Activated B cell treated with CpG ODN at 0.5 μM for 24 hours (primary cell): ENCODE measurements at regions of chr10 and their contacts with region 1.

Region 1: GRCh38 chr10:72248468-72249151 is 25.1 kb upstream of the DDIT4 start:
- DNase-seq: peak; percentile 54
- ATAC-seq: peak; percentile 78
- H3K4me3 Mint-ChIP-seq: peak overlapping the region; percentile 74
- H3K27ac Mint-ChIP-seq: peak overlapping the region; percentile 97
- H3K4me1 Mint-ChIP-seq: peaks cover 85% of the 10 kb centered on the region
- H3K27me3 Mint-ChIP-seq: no peaks in the 10 kb centered on the region
- CTCF ChIP-seq: no peak

Region 2: DNA sequence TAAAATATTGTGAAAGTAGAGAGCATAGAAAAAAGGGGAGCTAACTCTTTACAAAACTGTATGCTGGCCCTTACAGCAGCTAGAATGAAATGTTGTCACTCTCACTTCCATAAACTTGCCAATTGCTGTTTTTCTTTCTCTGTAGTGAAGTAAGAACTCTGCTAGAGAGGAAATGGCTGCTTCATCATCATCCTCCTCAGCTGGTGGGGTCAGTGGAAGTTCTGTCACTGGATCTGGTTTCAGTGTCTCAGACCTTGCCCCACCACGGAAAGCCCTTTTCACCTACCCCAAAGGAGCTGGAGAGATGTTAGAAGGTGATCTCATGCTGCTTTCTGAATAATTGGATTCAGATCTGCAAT is 24.9 kb before region 1 on chr10:
- CTCF ChIA-PET with region 1: interaction called, 5 read pairs
- POLR2A ChIA-PET with region 1: interaction called, 70 read pairs
- intact Hi-C with region 1: loop called (anchors 1 kb)
- DNase-seq: no peak
- ATAC-seq: peak; percentile 47
- H3K4me3 Mint-ChIP-seq: peak overlapping the region; percentile 59
- H3K27ac Mint-ChIP-seq: peak overlapping the region; percentile 84
- H3K4me1 Mint-ChIP-seq: peaks cover 67% of the 10 kb centered on the region
- H3K27me3 Mint-ChIP-seq: no peaks in the 10 kb centered on the region
- CTCF ChIP-seq: no peak

Region 3: GRCh38 chr10:72229261-72230251 is 19.1 kb before region 1 on chr10:
- CTCF ChIA-PET with region 1: interaction called, 5 read pairs
- POLR2A ChIA-PET with region 1: interaction called, 20 read pairs
- intact Hi-C with region 1: no loop called
- DNase-seq: no peak
- ATAC-seq: no peak
- H3K4me3 Mint-ChIP-seq: no peak overlapping the region
- H3K27ac Mint-ChIP-seq: no peak overlapping the region
- H3K4me1 Mint-ChIP-seq: peaks cover 37% of the 10 kb centered on the region
- H3K27me3 Mint-ChIP-seq: no peaks in the 10 kb centered on the region
- CTCF ChIP-seq: no peak

Region 4: GRCh38 chr10:72260588-72261322 is 12.1 kb after region 1 on chr10:
- CTCF ChIA-PET with region 1: interaction called, 7 read pairs
- POLR2A ChIA-PET with region 1: interaction called, 85 read pairs
- intact Hi-C with region 1: loop called (anchors 1 kb)
- DNase-seq: peak; percentile 70
- ATAC-seq: peak; percentile 71
- H3K4me3 Mint-ChIP-seq: peak overlapping the region; percentile 91
- H3K27ac Mint-ChIP-seq: peak overlapping the region; percentile 96
- H3K4me1 Mint-ChIP-seq: peaks cover 58% of the 10 kb centered on the region
- H3K27me3 Mint-ChIP-seq: no peaks in the 10 kb centered on the region
- CTCF ChIP-seq: no peak